ENCODE measurements at regions of chr20 and their contacts with region 1.

Region 1: DNA sequence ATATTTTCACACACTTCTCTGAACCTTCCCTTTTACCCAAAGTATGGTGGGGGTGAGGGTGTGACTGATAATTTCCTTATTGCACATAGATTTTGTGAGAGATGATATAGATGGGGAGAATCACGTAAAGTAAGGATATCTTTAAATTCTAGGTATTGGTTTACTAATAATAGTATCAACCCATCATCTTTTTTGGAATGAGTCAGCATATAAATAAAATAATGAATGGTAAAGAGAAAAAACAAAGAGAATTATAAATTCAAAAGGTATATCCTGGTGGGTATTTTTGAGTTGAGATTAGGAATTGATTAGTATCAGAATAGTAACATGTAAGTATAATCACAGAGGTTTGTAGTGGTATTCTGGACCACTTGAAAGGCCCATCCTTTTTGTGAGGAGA is 56.1 kb downstream of the MACROD2 start:
- DNase-seq: no peak
- ATAC-seq: no peak
- H3K4me3 ChIP-seq: no peak overlapping the region
- H3K27ac ChIP-seq: no peak overlapping the region
- H3K4me1 ChIP-seq: peaks cover 8% of the 10 kb centered on the region
- H3K27me3 ChIP-seq: no peaks in the 10 kb centered on the region
- CTCF ChIP-seq: no peak
- POLR2A ChIP-seq: no peak

Region 2: GRCh38 chr20:13825465-13825864 is 226.0 kb before region 1 on chr20:
- intact Hi-C with region 1: loop called (anchors 5 kb)
- DNase-seq: no peak
- ATAC-seq: no peak
- H3K4me3 ChIP-seq: no peak overlapping the region
- H3K27ac ChIP-seq: no peak overlapping the region
- H3K4me1 ChIP-seq: peaks cover under 1% of the 10 kb centered on the region
- H3K27me3 ChIP-seq: no peaks in the 10 kb centered on the region
- CTCF ChIP-seq: no peak
- POLR2A ChIP-seq: no peak

Region 3: GRCh38 chr20:14691994-14692393 is 640.5 kb after region 1 on chr20:
- intact Hi-C with region 1: no loop called
- DNase-seq: no peak
- ATAC-seq: no peak
- H3K4me3 ChIP-seq: no peak overlapping the region
- H3K27ac ChIP-seq: no peak overlapping the region
- H3K4me1 ChIP-seq: no peaks in the 10 kb centered on the region
- H3K27me3 ChIP-seq: no peaks in the 10 kb centered on the region
- CTCF ChIP-seq: no peak
- POLR2A ChIP-seq: no peak